ENCODE measurements at regions of chr4 and their contacts with region 1.

Region 1: DNA sequence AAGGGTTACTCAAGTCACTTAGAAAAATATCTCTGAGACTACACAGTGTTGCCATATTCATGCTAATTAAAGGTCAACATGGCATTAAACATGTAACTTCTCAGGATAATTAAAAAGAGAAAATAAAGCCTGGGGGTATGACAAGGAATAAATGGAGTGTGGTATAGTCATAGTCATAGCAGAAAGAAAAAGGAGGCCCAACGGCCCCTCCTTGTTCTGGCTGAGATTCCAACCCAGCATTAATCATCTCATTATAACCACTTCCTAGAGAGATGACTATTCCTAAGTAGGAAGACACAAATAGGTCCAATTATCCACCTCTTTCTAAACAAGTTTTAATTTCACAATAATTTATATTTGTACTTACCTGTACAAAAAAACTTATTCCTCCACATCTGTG is 778.4 kb upstream of the AADAT start:
- DNase-seq: no peak
- H3K4me3 ChIP-seq: no peak overlapping the region
- H3K27ac ChIP-seq: no peak overlapping the region
- H3K4me1 ChIP-seq: no peaks in the 10 kb centered on the region
- H3K27me3 ChIP-seq: no peaks in the 10 kb centered on the region
- CTCF ChIP-seq: no peak
- EP300 ChIP-seq: no peak
- POLR2A ChIP-seq: no peak

Region 2: DNA sequence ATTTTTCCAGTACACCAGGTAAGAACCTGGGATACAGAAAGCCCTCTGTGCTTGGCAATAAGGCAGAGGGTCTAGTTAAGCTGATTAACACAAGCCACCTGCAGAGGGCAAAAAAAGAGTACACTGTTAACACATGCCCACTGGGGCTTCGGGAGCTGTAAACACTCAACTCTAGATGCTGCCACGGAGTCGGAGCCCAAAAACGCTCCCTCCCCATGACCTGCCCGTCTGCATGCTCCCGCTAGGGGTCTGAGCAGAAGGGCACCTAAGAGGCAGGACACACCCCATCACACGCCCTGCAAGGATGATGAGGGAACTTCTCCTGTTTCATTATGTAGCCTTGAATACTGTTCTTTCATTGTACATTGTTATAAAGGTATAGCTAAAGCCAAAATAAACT is 62.8 kb before region 1 on chr4:
- intact Hi-C with region 1: no loop called
- DNase-seq: no peak
- H3K4me3 ChIP-seq: no peak overlapping the region
- H3K27ac ChIP-seq: no peak overlapping the region
- H3K4me1 ChIP-seq: no peaks in the 10 kb centered on the region
- H3K27me3 ChIP-seq: no peaks in the 10 kb centered on the region
- CTCF ChIP-seq: no peak
- EP300 ChIP-seq: no peak
- POLR2A ChIP-seq: no peak

Region 3: DNA sequence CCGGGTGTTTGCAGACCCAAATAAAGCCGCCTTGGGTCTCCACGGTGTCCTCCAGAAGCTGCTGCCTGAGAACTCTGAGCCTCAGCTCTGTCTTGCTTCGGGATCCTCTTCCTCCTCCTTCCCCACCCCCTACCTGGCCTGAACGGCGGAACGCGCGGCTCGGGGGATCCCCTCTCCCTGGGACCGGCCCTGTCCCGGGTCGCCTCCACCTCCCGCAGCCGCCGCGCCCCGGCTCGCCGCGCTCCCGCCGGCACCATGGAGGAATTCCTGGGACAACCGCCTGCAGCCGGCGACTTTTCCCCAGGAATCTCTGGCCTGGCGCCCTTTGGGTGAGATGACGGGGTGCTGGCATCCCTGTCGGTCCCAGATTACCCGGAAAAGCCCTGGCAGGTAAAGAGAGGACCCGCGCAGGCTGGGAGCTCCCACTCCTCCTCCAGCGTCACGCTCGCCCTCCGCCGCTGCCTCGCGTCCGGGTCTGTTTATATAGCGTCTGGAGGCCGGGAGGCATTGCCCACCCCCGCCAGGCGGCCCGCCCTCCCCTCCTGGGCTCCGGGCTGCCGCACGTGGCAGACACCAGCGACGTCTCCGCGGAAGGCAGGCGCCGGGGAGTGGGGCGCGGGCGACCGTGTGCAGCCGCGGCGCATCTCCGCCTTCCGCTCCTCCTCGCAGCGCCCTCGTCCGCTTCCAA is 944.8 kb after region 1 on chr4 and contains the start of gene GALNTL6:
- intact Hi-C with region 1: no loop called
- DNase-seq: no peak
- H3K4me3 ChIP-seq: no peak within 1 kb of the TSS
- H3K27ac ChIP-seq: no peak within 1 kb of the TSS
- H3K4me1 ChIP-seq: peaks cover 7% of the 10 kb centered on the region
- H3K27me3 ChIP-seq: no peaks in the 10 kb centered on the region
- CTCF ChIP-seq: no peak
- EP300 ChIP-seq: no peak
- POLR2A ChIP-seq: no peak
- total RNA-seq, gene GALNTL6: 0.11 to 1.8 TPM in 2 of 7 donors, not detected in the others

Region 4: DNA sequence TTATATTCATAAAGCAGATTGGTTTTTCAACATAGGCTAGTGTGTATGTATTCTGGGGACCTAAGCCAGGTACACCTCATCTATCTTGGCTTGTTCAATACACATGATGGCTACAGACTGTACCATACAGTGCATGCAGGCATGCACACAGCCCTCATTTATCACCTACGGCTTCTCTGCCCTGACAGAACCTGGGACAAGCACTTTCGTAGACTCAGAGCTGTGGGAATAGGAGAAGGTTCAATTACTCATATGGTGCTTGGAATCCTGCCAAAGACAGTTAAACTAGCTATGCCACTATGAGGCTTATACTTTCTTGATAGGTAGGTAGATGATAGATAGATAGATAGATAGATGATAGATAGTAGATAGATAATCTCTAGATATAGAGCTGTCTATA is 1402.2 kb after region 1 on chr4:
- intact Hi-C with region 1: loop called in 1 of 4 experiments (anchors 10 kb)
- DNase-seq: no peak
- H3K4me3 ChIP-seq: no peak overlapping the region
- H3K27ac ChIP-seq: no peak overlapping the region
- H3K4me1 ChIP-seq: no peaks in the 10 kb centered on the region
- H3K27me3 ChIP-seq: no peaks in the 10 kb centered on the region
- CTCF ChIP-seq: no peak
- EP300 ChIP-seq: no peak
- POLR2A ChIP-seq: no peak

Measured in ovary (tissue), 10 donors.